ENCODE measurements at regions of chr16 and their contacts with region 1.

Region 1: GRCh38 chr16:84970447-84971127 is 40.7 kb downstream of the ZDHHC7 start:
- DNase-seq: peak; percentile 85
- H3K4me3 ChIP-seq: no peak overlapping the region; a peak in 1 of 4 replicates
- H3K27ac ChIP-seq: no peak overlapping the region
- H3K4me1 ChIP-seq: peaks cover 2 to 4% of the 10 kb centered on the region in 2 experiments; a peak in 1 of 4 replicates
- H3K27me3 ChIP-seq: no peaks in the 10 kb centered on the region
- CTCF ChIP-seq: peak; percentile 97
- EP300 ChIP-seq: no peak
- RAD21 ChIP-seq: peak; percentile 90

Region 2: DNA sequence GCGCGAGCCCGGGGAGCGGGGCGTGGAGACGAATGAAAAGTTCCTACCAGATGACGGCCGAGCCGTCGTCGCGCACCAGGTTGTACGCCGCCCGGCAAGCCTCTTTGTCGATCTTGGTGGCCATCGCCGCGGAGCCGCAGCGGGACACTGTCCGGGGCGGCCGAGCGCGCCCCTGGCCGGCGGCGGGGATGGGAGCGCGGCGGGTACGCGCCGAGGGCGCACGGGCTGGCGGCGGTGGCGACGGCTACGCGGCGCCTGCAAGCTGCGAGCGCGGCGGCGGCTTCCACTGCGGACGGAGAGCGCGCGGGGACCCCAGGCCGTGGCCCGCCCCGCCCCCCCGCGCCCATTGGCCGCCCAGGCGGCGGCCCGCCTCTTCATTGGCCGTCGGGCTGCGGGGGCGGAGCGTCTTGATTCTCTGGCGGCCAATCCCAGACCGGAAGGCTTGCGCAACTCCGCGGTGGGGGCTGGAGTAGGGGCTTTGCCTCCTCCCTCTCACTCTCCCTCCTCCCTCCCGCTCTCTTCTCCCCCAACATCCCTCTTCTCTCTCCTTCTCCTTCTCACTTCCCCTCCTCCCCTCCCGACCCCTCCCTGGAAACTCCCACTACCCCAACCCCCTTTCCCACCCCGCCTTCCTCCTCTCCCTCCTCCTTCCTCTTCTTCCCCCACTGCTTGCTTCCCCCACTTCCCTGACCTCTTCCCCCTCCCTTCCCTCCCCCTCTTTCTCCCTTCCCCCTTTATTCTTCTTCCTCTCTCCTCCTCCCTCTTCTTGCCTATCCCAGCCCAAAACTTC is 352.6 kb before region 1 on chr16 and contains the start of gene COTL1:
- CTCF ChIA-PET with region 1: interaction called, 21 read pairs
- POLR2A ChIA-PET with region 1: no interaction called
- DNase-seq: peak; percentile 97
- H3K4me3 ChIP-seq: peak within 1 kb of the TSS; percentile 68 to 83
- H3K27ac ChIP-seq: peak within 1 kb of the TSS; percentile 7 to 92; a peak in 3 of 4 replicates
- H3K4me1 ChIP-seq: peaks cover 13 to 24% of the 10 kb centered on the region in 2 experiments; a peak in 3 of 4 replicates
- H3K27me3 ChIP-seq: no peaks in the 10 kb centered on the region
- CTCF ChIP-seq: no peak
- EP300 ChIP-seq: 0 out of 4 replicates have a peak, but pooled peaks of 1 of the 2 experiments have one; percentile 31
- RAD21 ChIP-seq: no peak
- polyA plus RNA-seq, gene COTL1: 59.5 and 91.6 TPM in 2 replicates

Region 3: DNA sequence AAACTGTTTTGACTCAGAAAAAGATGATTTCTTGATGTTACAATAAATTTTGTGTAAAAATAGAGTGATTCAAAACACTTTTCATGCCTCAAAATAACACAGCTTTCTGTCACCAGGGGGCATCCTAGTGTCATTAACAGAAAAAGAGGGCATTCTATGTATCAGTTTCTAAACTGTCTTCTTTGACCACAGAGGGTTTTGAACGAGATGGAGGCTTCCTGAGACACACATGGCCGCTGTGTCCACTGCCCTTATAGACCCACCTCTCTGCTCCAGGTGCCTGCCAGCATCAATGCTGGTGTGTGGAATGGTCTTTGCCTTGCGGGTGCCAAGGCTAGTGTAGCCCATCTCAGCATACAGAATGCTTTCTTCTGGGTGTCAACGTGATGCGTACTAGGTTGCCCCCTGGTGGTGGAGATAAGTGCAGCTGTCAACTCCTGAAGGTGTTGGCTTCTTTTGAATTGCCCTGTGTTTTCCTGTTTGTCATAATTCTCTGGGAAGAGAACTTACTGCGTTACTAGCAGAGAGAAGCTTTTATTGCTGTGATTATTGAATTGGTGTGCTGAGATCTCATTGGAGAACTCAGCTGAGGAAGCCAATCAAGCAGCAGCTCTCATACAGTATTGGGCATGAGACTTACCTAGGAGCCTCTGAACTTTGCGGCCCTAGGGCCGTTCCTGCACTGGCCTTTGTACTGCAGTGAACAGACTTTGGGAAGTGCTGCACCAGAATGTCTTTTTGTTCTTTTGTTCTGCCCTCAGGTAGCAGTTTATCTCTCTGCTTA is 232.1 kb before region 1 on chr16:
- CTCF ChIA-PET with region 1: interaction called, 206 read pairs
- POLR2A ChIA-PET with region 1: no interaction called
- DNase-seq: peak; percentile 74
- H3K4me3 ChIP-seq: peak overlapping the region in 1 of 2 experiments; percentile 6; a peak in 1 of 4 replicates
- H3K27ac ChIP-seq: no peak overlapping the region
- H3K4me1 ChIP-seq: peaks cover 35 to 37% of the 10 kb centered on the region in 2 experiments
- H3K27me3 ChIP-seq: no peaks in the 10 kb centered on the region
- CTCF ChIP-seq: peak; percentile 94
- EP300 ChIP-seq: no peak
- RAD21 ChIP-seq: peak; percentile 64

Region 4: GRCh38 chr16:84765616-84766580 is 204.7 kb before region 1 on chr16:
- CTCF ChIA-PET with region 1: interaction called, 428 read pairs
- POLR2A ChIA-PET with region 1: no interaction called
- DNase-seq: no peak
- H3K4me3 ChIP-seq: no peak overlapping the region
- H3K27ac ChIP-seq: no peak overlapping the region
- H3K4me1 ChIP-seq: peaks cover 0 to 13% of the 10 kb centered on the region in 2 experiments; a peak in 2 of 4 replicates
- H3K27me3 ChIP-seq: no peaks in the 10 kb centered on the region
- CTCF ChIP-seq: no peak
- EP300 ChIP-seq: no peak
- RAD21 ChIP-seq: no peak

Region 5: DNA sequence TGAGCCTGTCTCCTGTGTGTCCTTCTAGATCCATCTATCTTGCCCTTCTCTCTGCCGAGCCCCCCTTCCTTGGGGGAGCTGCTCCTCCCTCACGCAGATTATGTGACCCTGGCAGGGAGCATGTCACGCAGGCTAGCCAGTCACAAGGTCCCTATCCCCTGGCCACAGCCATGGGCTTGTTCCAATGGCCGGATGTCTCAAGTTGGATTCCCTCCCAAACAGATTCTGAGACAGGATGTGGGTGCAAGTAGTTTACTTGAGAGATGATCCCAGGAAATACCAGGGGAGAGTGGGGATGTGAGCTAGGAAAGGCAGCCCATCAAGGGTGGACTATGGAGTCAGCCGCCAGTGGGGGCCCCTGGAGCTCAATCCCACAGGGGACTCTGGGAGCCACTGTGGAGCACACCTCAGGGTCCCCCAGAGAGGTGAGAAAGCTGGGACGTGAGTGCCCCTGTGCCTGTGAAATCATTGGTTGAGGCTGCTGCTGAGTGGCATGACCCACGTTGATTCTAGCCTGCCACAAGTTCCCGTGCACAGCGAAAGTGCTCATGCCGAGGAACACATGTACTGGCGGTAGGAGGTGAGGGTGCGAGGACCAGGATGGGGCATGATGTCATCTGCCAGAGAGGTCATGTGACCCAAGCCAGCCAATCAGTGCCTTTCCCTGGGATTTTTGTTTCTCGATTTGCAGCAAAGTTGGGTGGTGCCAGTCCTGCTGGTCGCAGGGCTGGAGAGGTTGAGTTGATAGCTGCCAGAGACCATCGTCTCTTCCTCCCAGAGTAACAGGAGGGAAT is 157.2 kb before region 1 on chr16:
- CTCF ChIA-PET with region 1: interaction called, 12 read pairs
- POLR2A ChIA-PET with region 1: no interaction called
- DNase-seq: no peak
- H3K4me3 ChIP-seq: no peak overlapping the region
- H3K27ac ChIP-seq: no peak overlapping the region
- H3K4me1 ChIP-seq: no peaks in the 10 kb centered on the region
- H3K27me3 ChIP-seq: no peaks in the 10 kb centered on the region; the same call in 1 of the 2 replicates
- CTCF ChIP-seq: no peak
- EP300 ChIP-seq: no peak
- RAD21 ChIP-seq: no peak

Region 6: GRCh38 chr16:84854759-84855158 is 115.8 kb before region 1 on chr16:
- CTCF ChIA-PET with region 1: no interaction called
- POLR2A ChIA-PET with region 1: no interaction called
- DNase-seq: no peak
- H3K4me3 ChIP-seq: no peak overlapping the region
- H3K27ac ChIP-seq: no peak overlapping the region
- H3K4me1 ChIP-seq: no peaks in the 10 kb centered on the region
- H3K27me3 ChIP-seq: no peaks in the 10 kb centered on the region
- CTCF ChIP-seq: no peak
- EP300 ChIP-seq: no peak
- RAD21 ChIP-seq: no peak

Region 7: GRCh38 chr16:84874004-84874435 is 96.6 kb before region 1 on chr16:
- CTCF ChIA-PET with region 1: no interaction called
- POLR2A ChIA-PET with region 1: no interaction called
- DNase-seq: peak; percentile 57
- H3K4me3 ChIP-seq: no peak overlapping the region
- H3K27ac ChIP-seq: peak overlapping the region in 1 of 2 experiments; percentile 31; a peak in 1 of 4 replicates
- H3K4me1 ChIP-seq: peaks cover 0 to 11% of the 10 kb centered on the region in 2 experiments; a peak in 2 of 4 replicates
- H3K27me3 ChIP-seq: no peaks in the 10 kb centered on the region
- CTCF ChIP-seq: no peak
- EP300 ChIP-seq: no peak
- RAD21 ChIP-seq: no peak

Region 8: GRCh38 chr16:84982434-84982833 is 11.8 kb after region 1 on chr16:
- CTCF ChIA-PET with region 1: interaction called, 41 read pairs
- POLR2A ChIA-PET with region 1: no interaction called
- DNase-seq: no peak
- H3K4me3 ChIP-seq: no peak overlapping the region
- H3K27ac ChIP-seq: no peak overlapping the region
- H3K4me1 ChIP-seq: peaks cover 4 to 25% of the 10 kb centered on the region in 2 experiments; a peak in 3 of 4 replicates
- H3K27me3 ChIP-seq: no peaks in the 10 kb centered on the region
- CTCF ChIP-seq: no peak
- EP300 ChIP-seq: no peak
- RAD21 ChIP-seq: no peak

Region 9: GRCh38 chr16:85010931-85011845 is 40.6 kb after region 1 on chr16 and contains the start of gene ZDHHC7:
- CTCF ChIA-PET with region 1: interaction called, 12 read pairs
- POLR2A ChIA-PET with region 1: interaction called, 3 read pairs
- DNase-seq: peak; percentile 96
- H3K4me3 ChIP-seq: peak within 1 kb of the TSS; percentile 75 to 95
- H3K27ac ChIP-seq: peak within 1 kb of the TSS; percentile 93 to 99
- H3K4me1 ChIP-seq: peaks cover 7 to 8% of the 10 kb centered on the region in 2 experiments; a peak in 3 of 4 replicates
- H3K27me3 ChIP-seq: no peaks in the 10 kb centered on the region
- CTCF ChIP-seq: no peak; the same call in 1 of the 2 replicates
- EP300 ChIP-seq: no peak
- RAD21 ChIP-seq: no peak
- polyA plus RNA-seq, gene ZDHHC7: 69.3 and 114 TPM in 2 replicates

Measured in SK-N-SH (cell line).